OCI-LY7 (cell line): ENCODE measurements at regions of chr13 and their contacts with region 1.

Region 1: GRCh38 chr13:84491952-84492351 is 609.7 kb upstream of the SLITRK1 start:
- DNase-seq: no peak
- H3K4me3 ChIP-seq: no peak overlapping the region
- H3K27ac ChIP-seq: no peak overlapping the region
- H3K4me1 ChIP-seq: no peaks in the 10 kb centered on the region
- CTCF ChIP-seq: no peak

Region 2: DNA sequence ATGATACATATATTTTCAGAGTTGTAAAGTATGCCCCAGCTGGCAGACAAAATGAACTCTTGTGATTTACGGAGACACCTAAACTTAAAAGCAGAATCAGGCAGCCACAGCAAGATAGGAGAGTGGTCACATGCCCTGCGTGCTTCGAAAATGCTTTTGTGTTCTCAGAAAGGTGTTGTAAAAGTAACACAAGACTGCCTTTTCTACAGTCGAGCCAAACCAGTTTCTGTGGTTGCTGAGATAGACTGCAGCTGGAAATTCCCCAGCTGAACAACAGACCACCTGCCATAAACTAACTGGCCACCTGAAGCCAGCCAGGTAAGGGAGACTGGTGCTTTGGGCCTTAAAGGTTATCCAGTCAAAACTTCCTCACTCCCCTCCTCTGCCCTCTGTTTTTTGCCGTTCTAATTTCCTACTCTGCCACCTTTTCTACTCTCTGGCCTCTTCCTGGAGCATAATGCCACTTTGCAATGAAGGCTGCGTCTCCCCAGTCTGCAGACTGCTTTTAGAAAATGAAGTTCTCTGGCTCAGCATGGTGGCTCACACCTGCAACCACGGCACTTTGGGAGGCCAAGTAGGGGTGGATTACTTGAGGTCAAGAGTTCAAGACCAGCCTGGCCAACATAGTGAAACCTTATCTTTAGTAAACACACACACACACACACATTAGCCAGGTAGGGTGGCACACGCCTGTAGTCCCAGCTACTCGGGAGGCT is 228.4 kb before region 1 on chr13:
- CTCF ChIA-PET with region 1: no interaction called
- POLR2A ChIA-PET with region 1: interaction called, 10 read pairs
- intact Hi-C with region 1: no loop called
- DNase-seq: no peak
- H3K4me3 ChIP-seq: no peak overlapping the region
- H3K27ac ChIP-seq: no peak overlapping the region
- H3K4me1 ChIP-seq: no peaks in the 10 kb centered on the region
- CTCF ChIP-seq: no peak

Region 3: GRCh38 chr13:84683448-84683847 is 191.5 kb after region 1 on chr13:
- CTCF ChIA-PET with region 1: no interaction called
- POLR2A ChIA-PET with region 1: no interaction called
- intact Hi-C with region 1: no loop called
- DNase-seq: no peak
- H3K4me3 ChIP-seq: no peak overlapping the region
- H3K27ac ChIP-seq: no peak overlapping the region
- H3K4me1 ChIP-seq: no peaks in the 10 kb centered on the region
- CTCF ChIP-seq: no peak